ENCODE measurements at regions of chr7 and their contacts with region 1.

Region 1: GRCh38 chr7:125406111-125406510 is 476.5 kb upstream of the POT1 start:
- DNase-seq: no peak
- H3K4me3 ChIP-seq: no peak overlapping the region
- CTCF ChIP-seq: no peak
- POLR2A ChIP-seq: no peak

Region 2: DNA sequence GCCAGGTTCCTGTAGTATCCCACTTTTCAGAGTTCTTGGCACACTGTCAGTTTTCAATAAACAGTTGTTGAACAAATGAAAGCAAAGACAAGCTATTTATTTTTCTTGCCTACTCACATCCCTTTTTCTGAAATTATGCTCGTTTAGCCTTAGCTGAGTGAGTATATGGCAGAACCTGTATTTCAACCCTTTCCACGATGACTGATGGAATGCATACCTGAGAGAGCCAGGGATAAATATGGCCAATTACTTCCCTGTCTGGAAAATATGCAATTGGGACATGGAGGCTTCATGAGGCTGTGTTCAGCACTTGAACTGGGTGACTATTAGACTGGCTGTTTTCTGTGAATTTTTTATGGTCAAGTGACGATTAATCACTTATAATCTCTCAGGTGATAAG is 332.0 kb before region 1 on chr7:
- intact Hi-C with region 1: no loop called
- DNase-seq: no peak
- H3K4me3 ChIP-seq: no peak overlapping the region
- CTCF ChIP-seq: no peak
- POLR2A ChIP-seq: no peak

Region 3: GRCh38 chr7:125427676-125428075 is 21.6 kb after region 1 on chr7:
- intact Hi-C with region 1: loop called (anchors 2 kb)
- DNase-seq: no peak
- H3K4me3 ChIP-seq: no peak overlapping the region
- CTCF ChIP-seq: no peak
- POLR2A ChIP-seq: no peak

Region 4: DNA sequence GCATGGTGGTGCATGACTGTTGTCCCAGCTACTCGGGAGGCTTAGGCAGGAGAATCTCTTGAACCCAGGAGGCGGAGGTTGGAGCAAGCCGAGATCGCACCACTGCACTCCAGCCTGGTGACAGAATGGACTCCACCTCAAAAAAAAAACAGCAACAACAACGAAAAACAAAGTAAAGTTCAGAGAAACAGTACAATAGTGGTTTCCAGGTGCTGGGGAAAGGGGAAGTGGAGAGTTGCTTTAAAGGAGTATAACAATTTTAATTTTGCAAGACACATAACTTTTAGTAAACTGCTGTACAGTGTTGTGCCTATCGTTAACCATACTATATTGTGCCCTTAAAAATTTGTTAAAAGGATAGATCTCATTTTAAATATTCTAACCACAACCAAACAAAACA is 186.2 kb after region 1 on chr7:
- intact Hi-C with region 1: no loop called
- DNase-seq: no peak
- H3K4me3 ChIP-seq: no peak overlapping the region
- CTCF ChIP-seq: no peak
- POLR2A ChIP-seq: no peak